Tibial artery (tissue), 4 donors: ENCODE measurements at regions of chr2 and their contacts with region 1.

Region 1: DNA sequence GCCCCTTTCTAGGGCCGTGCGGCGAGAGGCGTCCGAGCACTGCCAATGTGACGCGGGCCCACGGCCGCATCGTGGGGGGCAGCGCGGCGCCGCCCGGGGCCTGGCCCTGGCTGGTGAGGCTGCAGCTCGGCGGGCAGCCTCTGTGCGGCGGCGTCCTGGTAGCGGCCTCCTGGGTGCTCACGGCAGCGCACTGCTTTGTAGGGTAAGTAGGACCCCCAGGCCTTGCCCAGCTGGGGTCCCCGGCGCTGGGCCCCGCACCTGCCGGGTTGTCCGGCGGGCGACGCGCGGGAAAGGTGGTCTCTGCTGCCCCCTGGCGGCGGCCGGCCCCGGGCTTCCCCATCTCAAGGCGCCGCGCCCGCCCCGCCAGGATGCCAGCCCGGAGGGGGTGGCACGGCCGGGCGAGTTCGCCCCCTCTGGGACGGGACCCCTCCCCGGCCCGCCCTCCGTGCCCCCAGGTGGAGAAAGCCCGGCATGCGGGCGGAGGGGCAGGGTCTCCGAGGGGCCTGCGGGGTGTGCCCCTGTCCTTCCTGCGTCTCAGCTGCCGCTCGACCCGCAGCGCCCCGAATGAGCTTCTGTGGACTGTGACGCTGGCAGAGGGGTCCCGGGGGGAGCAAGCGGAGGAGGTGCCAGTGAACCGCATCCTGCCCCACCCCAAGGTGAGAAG is 1.9 kb downstream of the PRSS56 start:
- DNase-seq: no peak
- H3K4me3 ChIP-seq: peak overlapping the region; percentile 9 to 37
- H3K27ac ChIP-seq: no peak overlapping the region
- H3K4me1 ChIP-seq: peaks cover 0 to 37% (median 24%) of the 10 kb centered on the region in 4 donors
- H3K27me3 ChIP-seq: peaks cover 4 to 88% of the 10 kb centered on the region in 2 donors
- CTCF ChIP-seq: peak; percentile 69 to 87

Region 2: GRCh38 chr2:232444409-232445148 is 77.5 kb before region 1 on chr2:
- intact Hi-C with region 1: loop called (anchors 2 kb)
- DNase-seq: peak in 1 of 2 donors; percentile 60
- H3K4me3 ChIP-seq: no peak overlapping the region
- H3K27ac ChIP-seq: no peak overlapping the region
- H3K4me1 ChIP-seq: peaks cover 0 to 5% (median 0%) of the 10 kb centered on the region in 4 donors
- H3K27me3 ChIP-seq: peaks cover 0 to 22% of the 10 kb centered on the region in 2 donors
- CTCF ChIP-seq: peak in 1 of 2 experiments; percentile 16

Region 3: DNA sequence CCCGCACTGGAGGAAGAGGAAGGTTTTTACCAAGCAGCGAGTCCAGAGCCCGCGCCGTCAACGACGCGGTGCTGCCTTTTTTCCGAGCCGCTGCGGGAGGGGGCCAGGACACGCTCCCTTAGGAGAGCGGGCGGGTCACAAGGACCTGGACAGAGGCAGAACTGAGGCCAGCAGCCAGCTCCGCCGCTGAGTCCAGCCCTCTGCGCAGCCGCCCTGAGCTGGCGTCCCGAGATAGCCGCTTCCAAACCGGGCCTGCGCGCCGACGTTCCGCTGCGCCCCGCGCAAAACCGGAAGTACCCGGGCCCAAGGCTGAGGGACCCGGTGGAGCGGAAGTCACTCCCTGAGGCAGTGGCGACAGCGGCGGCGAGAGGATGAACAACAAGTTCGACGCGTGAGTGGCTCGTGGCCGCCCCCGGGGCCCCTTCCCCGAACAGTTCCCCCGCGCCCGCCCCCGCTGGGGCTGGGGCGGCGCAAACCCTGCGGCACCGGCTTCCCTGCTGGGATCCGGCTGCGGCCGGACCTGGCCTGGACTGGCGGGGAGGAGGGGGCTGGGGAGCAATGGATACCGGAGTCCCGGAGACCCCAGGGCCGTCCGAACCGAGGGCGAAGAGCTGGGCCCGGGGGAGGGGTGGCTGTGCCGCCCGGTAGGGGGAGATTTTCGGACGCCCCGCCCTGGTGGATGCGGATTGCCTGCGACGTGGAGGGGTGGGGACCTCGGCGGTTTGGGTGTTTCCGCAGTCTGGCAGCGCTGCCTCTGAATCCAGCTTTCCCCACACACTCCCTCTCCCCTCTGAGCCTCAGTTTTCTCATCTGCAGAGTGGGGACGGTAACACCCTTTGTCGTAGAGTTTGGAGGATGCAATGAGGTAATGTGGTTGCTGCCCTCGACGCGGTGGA is 28.5 kb after region 1 on chr2 and contains the starts of genes EIF4E2 and TIGD1:
- intact Hi-C with region 1: no loop called
- DNase-seq: peak; percentile 92 to 97
- H3K4me3 ChIP-seq: peak within 1 kb of the TSS; percentile 83 to 95
- H3K27ac ChIP-seq: peak within 1 kb of the TSS; percentile 94 to 99
- H3K4me1 ChIP-seq: peaks cover 0 to 37% (median 16%) of the 10 kb centered on the region in 4 donors
- H3K27me3 ChIP-seq: no peaks in the 10 kb centered on the region
- CTCF ChIP-seq: peak; percentile 34 to 53